ENCODE measurements at regions of chr17 and their contacts with region 1.

Region 1: DNA sequence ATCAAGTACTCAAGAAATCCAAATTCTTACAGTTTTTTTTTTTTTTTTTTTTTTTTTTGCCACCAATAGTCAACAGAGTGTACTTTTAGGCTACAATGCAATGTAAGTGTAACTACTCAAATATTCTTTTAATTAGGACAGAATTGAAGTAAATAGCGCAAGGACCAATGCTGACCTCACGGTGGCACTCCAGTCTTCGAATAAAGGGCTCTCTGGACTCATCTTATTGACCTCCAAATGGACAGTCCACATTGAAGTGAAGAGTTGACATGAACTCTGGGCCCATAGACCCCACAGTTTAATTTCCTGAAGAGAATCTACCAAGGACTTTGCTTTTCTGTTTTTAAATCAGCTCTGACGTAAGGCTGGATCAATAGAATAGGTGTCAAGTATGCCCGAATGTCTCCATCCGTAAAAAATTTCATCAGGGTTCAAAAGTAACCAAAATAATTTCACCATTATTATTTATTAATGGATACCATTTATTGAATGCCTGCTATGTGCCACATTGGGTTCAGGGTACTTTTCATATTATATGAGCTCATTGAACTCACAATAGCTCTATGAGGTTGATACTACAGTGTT is 7.3 kb upstream of the DDX52 start:
- DNase-seq: peak; percentile 26 to 57 (median 41)
- ATAC-seq: peak; percentile 71
- H3K4me3 ChIP-seq: no peak overlapping the region
- H3K27ac ChIP-seq: no peak overlapping the region
- H3K4me1 ChIP-seq: no peaks in the 10 kb centered on the region
- H3K27me3 ChIP-seq: no peaks in the 10 kb centered on the region
- CTCF ChIP-seq: peak in 6 of 7 experiments; percentile 20 to 59 (median 51)
- POLR2A ChIP-seq: no peak

Region 2: GRCh38 chr17:37770631-37771518 is 120.4 kb after region 1 on chr17:
- intact Hi-C with region 1: loop called (anchors 10 kb)
- DNase-seq: peak; percentile 82 to 91 (median 86)
- ATAC-seq: peak; percentile 90
- H3K4me3 ChIP-seq: no peak overlapping the region
- H3K27ac ChIP-seq: no peak overlapping the region
- H3K4me1 ChIP-seq: peaks cover 3% of the 10 kb centered on the region
- H3K27me3 ChIP-seq: no peaks in the 10 kb centered on the region
- CTCF ChIP-seq: peak; percentile 66 to 94 (median 89)
- POLR2A ChIP-seq: no peak